A549 (cell line): ENCODE measurements at regions of chr22 and their contacts with region 1.

Region 1: DNA sequence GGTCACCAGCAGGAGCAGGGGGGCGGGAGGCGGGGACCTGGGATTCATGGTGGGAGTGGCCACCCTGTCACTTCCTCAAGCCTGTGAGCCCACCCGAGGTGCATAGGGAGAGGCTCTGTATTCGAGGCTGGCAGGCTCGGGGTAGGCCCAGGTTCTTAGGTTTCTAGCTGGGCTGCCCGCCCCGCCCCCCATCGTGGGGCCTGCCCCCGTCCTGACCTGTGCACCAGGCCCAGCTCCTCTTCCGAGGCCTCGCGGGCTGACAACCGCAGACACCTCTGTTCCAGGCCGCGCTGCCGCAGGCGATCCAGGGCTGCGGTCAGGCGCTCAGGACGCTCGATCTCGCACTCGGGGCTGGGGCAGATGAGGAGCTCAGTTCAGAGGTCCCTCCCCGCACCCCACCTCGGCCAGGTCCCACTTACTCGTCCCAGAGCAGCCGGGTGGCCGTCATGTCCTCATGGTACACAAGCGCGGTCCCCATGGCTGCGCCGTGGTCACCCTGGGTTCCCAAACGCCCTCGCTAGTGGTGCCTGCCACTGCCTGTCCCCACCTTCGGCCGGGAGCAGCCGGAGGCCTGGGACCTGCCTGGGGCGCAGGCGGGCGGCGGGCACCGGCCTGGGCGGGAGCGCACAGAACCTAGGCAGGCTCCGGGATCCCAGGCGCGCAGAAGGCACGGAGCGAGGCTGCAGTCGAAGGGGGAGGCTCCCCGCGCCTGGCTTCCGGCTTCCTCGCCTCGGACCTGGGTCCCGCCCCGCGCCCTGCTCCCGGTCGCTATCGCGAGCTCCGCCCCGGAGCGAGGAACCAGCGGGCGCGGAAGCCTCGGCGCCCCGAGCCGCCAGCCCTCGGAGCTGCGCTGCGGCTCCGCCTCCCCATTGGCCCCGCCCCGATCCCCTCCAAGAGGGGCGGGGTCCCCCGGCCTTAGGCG is at the start of gene HDAC10:
- DNase-seq: peak in 1 of 2 experiments; percentile 43
- ATAC-seq: peak; percentile 46 to 71
- H3K4me3 ChIP-seq: peak within 1 kb of the TSS; percentile 53
- H3K27ac ChIP-seq: peak within 1 kb of the TSS; percentile 76 to 93
- H3K4me1 ChIP-seq: peaks cover 17% of the 10 kb centered on the region; the same call in 2 of the 3 replicates
- CTCF ChIP-seq: no peak
- EP300 ChIP-seq: no peak
- POLR2A ChIP-seq: no peak; the same call in 1 of the 2 replicates
- RAD21 ChIP-seq: no peak
- polyA plus RNA-seq, gene HDAC10: 2.4 and 2.5 TPM in 2 replicates

Region 2: DNA sequence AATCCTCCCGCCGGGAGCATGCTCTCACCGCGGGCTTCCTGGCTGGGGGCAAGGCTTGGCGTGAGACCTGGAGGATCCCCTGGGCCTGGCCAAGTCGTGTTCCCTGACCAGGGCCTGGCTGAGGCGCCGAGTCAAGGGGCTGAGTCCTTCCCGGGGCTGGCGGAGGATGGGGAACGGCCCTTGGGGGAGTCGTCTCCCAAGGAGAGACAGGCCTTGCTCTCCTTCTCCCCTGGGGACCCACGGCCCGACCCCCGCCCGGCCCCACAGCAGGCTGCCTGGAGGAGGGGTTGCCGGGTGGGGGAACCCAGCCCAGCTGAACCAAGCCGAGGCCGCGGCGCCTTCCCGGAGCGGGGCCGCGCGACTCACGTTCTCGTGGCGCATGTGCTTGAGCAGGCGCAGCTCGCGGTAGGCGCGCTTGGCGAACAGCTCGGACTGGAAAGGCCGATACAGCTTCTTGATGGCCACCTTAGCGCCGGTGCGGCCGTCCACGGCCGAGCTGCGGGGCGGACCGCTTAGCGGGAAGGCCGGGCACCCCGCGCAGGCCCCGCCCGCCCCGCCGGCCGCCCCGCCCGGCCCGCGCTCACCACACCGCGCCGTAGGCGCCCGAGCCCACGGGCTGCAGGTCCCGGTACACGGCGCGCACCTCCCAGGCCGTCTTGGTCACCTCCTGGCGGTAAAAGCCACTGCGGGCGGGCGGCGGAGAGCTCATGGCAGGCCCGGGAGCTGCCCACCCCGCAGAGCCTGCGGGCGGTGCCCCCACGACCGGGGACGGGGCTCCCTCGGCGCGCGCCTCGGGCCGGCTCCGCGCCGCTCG is 10.2 kb after region 1 on chr22:
- CTCF ChIA-PET with region 1: interaction called, 27 read pairs
- POLR2A ChIA-PET with region 1: interaction called, 4 read pairs
- DNase-seq: peak in 1 of 2 experiments; percentile 72
- ATAC-seq: peak; percentile 40 to 68
- H3K4me3 ChIP-seq: peak overlapping the region; percentile 90
- H3K27ac ChIP-seq: peak overlapping the region; percentile 98 to 99
- H3K4me1 ChIP-seq: peaks cover 23% of the 10 kb centered on the region
- CTCF ChIP-seq: no peak
- EP300 ChIP-seq: no peak
- POLR2A ChIP-seq: peak; percentile 45
- RAD21 ChIP-seq: no peak

Region 3: DNA sequence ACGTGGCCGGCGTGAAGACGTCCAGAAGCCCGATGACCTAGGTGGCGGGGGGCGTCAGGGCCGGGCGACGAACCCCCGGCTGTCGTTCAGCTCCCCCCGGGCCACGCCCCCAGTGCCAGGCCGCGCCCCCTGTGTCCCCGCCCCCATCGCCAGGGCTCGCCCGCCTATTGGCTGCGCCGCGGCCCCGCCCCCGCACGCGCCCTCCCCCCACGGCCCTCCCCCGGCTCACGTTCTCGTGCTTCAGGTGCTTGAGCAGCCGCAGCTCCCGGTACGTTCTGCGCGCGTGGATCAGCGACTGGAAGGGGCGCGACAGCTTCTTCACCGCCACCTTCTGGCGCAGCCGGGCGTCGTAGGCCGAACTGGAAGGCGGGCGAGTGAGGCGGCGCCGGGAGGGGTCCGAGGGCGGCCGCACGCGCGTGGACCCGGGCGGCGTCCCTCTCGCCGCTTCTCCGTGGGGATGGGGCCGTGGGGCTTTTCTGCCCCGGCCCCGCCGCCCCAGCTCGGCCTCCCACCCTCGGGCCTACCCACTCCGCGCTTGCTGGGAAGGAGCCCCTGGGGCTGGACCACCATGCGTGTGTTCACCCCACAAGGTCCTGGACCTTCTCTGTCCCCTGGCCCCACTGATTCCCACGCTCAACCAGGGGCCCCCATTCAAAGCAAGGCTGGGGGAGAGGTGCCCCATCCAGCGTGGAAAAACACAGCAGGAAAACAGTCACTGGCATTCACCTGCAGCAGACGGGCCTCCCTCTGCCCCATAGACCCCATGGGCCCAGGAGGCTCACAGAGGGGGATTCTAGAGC is 17.0 kb after region 1 on chr22:
- CTCF ChIA-PET with region 1: interaction called, 27 read pairs
- POLR2A ChIA-PET with region 1: interaction called, 3 read pairs
- DNase-seq: peak in 1 of 2 experiments; percentile 60
- ATAC-seq: peak in 1 of 2 experiments; percentile 25; a peak in 3 of 6 replicates
- H3K4me3 ChIP-seq: peak overlapping the region; percentile 44
- H3K27ac ChIP-seq: peak overlapping the region; percentile 64 to 78; a peak in 4 of 6 replicates
- H3K4me1 ChIP-seq: peaks cover 48% of the 10 kb centered on the region
- CTCF ChIP-seq: no peak
- EP300 ChIP-seq: no peak
- POLR2A ChIP-seq: no peak
- RAD21 ChIP-seq: no peak